ENCODE measurements at regions of chr17 and their contacts with region 1.

Region 1: DNA sequence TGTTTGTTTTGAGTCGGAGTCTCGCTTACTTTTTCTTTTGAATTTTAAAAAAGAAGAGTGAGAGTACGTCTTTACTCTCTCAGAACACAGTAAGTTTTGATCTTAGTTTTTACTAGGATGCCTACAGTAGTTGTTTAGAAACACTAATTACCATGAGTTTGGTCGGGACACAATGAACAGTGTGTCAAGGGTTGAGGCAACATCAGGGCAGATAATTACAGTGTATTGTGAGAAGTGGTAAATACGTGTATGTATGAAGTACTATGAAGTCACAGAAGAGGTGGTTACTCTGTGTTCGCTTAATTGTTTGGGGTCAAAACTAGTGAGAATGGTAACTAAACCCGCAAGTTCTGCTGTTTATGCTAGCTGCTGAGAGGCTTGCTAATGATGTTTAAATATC is 18.2 kb downstream of the PAFAH1B1 start:
- DNase-seq: no peak
- ATAC-seq: no peak
- H3K4me3 ChIP-seq: no peak overlapping the region
- H3K27ac ChIP-seq: no peak overlapping the region
- H3K4me1 ChIP-seq: no peaks in the 10 kb centered on the region
- H3K27me3 ChIP-seq: no peaks in the 10 kb centered on the region
- CTCF ChIP-seq: no peak

Region 2: DNA sequence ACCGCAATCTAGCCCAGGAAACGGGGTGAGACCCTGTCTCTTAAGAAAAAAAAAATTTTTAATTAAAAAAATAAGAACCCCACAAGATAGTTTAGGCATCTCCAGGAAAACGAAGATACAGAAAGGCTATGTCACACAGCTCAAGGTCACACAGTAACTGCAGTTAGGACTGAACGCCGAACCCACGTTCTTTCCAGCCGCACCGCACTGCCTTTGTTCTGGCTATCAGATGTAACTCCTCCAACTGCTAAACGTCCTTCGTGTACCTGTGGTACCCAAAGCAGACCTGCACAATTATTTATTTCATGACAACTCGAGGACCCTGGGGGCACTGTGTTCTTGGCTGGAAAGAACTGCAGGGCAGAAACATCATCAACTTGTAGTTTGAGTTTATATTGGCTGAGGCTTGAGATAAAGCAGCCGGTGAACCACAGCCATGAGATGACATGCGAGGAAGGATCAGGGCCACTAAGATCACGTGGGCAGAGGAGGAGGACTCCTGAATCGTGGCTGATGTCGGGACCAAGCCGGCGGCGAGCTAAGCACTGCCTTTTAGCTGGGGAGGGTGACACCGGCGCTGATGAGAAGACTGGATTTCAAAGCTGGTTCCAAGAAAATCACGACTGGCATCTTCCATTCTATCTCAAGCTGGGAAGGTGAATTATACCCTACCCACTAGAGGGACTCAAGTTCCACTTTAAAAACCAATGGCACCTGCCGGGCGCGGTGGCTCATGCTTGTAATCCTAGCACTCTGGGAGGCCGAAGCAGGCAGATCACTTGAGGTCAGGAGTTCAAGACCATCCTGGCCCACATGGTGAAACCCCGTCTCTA is 190.1 kb before region 1 on chr17:
- CTCF ChIA-PET with region 1: no interaction called
- POLR2A ChIA-PET with region 1: no interaction called
- intact Hi-C with region 1: no loop called
- DNase-seq: no peak
- ATAC-seq: no peak
- H3K4me3 ChIP-seq: no peak overlapping the region
- H3K27ac ChIP-seq: no peak overlapping the region
- H3K4me1 ChIP-seq: no peaks in the 10 kb centered on the region
- H3K27me3 ChIP-seq: no peaks in the 10 kb centered on the region
- CTCF ChIP-seq: no peak

Region 3: DNA sequence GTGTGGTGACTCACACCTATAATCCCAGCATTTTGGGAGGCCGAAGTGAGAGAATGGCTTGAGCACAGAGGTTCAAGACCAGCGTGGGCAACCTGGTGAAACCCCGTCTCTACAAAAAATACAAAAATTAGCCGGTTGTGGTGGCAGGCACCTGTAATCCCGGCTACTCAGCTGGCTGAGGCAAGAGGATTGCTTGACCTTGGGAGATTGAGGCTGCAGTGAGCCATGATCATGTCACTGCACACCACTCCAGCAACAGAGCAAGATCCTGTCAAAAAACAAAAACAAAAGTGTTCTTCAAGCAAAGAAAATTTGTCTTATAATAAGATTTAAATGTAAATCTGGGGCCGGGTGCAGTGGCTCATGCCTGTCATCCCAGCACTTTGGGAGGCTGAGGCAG is 33.3 kb after region 1 on chr17:
- CTCF ChIA-PET with region 1: interaction called, 3 read pairs
- POLR2A ChIA-PET with region 1: interaction called, 17 read pairs
- intact Hi-C with region 1: no loop called
- DNase-seq: no peak
- ATAC-seq: no peak
- H3K4me3 ChIP-seq: no peak overlapping the region
- H3K27ac ChIP-seq: no peak overlapping the region
- H3K4me1 ChIP-seq: peaks cover 4% of the 10 kb centered on the region; the same call in 1 of the 2 replicates
- H3K27me3 ChIP-seq: no peaks in the 10 kb centered on the region
- CTCF ChIP-seq: no peak